ENCODE measurements at regions of chr10 and their contacts with region 1.

Region 1: DNA sequence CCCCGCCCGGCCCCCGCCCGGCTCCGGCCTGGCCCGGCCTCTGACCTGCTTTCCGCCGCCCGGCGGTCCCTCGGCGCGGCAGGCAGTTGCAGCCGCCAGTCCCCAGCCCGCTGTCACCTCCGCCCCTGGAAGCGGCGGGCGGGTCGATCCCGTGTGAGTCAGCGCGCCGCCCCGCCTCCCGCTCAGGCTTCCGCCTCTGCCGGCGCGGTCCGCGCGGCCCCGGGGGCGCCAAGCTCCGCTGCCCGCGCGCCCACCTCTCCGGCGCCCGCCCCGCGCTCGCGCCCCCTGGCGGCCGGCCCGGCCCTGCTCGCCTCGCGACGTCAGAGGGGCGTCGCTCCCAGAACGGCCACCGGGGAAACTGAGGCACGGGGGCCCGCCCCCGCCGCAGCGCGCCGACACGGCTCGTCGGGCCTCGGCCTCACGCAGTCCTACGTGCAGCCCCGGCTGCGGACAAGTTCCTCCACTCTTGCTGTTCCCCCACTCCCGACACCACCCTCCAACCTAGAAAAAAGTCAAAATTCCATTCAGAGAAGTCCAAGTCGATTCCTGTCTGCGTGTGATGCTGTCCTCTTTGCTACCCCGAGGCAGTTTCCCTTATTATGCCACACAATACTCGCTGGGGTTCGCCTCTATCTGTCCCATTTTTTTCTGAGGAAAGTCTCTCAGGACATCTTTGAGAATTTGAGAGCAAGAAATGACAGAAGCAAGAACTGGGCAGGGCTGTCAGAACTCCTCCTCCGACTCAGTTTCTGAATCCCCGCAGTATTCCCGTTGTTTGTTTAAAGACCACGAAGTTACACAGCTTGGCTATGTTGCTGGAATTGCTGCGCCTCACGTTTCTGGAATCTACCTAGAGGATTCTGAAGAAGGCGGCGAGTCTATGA is at the start of gene DNMBP:
- DNase-seq: peak; percentile 83 to 90 (median 87)
- H3K4me3 ChIP-seq: peak within 1 kb of the TSS; percentile 48
- H3K27ac ChIP-seq: peak within 1 kb of the TSS; percentile 62 to 88
- H3K4me1 ChIP-seq: peaks cover 8% of the 10 kb centered on the region
- H3K27me3 ChIP-seq: no peaks in the 10 kb centered on the region
- CTCF ChIP-seq: peak in 2 of 3 donors; percentile 88 to 89
- EP300 ChIP-seq: no peak
- POLR2A ChIP-seq: peak; percentile 28
- total RNA-seq, gene DNMBP: 10.8 to 25.4 (median 20.3) TPM

Region 2: GRCh38 chr10:99854860-99855259 is 155.2 kb before region 1 on chr10:
- intact Hi-C with region 1: loop called in 2 of 4 experiments (anchors 5 to 10 kb)
- DNase-seq: peak; percentile 35 to 63 (median 41)
- H3K4me3 ChIP-seq: no peak overlapping the region
- H3K27ac ChIP-seq: no peak overlapping the region
- H3K4me1 ChIP-seq: no peaks in the 10 kb centered on the region
- H3K27me3 ChIP-seq: no peaks in the 10 kb centered on the region
- CTCF ChIP-seq: peak; percentile 33 to 60 (median 54)
- EP300 ChIP-seq: no peak
- POLR2A ChIP-seq: no peak

Region 3: GRCh38 chr10:99906470-99906869 is 103.6 kb before region 1 on chr10:
- intact Hi-C with region 1: loop called in 2 of 4 experiments (anchors 5 to 10 kb)
- DNase-seq: peak in 4 of 5 donors; percentile 29 to 55 (median 38)
- H3K4me3 ChIP-seq: no peak overlapping the region
- H3K27ac ChIP-seq: no peak overlapping the region
- H3K4me1 ChIP-seq: peaks cover 2% of the 10 kb centered on the region
- H3K27me3 ChIP-seq: no peaks in the 10 kb centered on the region
- CTCF ChIP-seq: no peak
- EP300 ChIP-seq: no peak
- POLR2A ChIP-seq: no peak

Region 4: DNA sequence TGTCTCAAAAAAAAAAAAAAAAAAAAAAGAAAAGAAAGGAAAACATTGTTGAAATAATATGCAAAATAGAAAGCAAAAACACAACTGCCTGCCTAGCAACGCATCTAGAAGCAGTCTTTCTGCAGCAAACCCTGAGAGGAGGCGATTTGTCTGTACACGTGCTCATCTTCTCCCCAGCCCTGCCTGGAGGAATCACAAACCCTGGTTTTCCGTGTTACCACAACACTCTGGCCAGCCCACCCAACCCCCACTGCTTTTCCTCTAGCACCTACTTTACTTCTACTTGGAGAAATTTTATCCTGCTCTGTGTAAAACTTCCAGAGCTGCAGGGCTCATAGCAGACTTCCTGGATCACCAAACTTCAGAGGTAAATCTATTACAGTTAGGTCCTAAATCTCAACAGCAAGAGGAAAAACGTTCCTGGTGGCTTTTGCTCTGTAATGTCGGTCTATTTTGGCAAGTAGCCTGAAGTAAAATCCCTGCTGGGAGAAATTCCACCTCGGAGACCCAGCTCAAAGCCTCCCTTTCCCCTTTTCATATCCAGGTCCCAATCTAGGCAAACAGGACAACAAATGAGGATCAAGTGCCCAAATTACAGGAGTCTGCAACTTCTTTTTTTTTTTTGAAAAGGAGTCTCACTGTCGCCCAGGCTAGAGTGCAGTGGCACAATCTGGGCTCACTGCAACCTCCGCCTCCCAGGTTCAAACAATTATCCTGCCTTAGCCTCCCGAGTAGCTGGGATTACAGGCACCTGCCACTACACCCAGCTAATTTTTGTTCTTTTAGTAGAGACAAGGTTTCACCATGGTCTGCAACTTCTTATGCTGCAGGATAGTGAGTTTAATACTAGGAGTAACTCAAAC is 91.8 kb before region 1 on chr10:
- intact Hi-C with region 1: loop called in 1 of 4 experiments (anchors 10 kb)
- DNase-seq: peak; percentile 59 to 71 (median 64)
- H3K4me3 ChIP-seq: peak overlapping the region; percentile 8
- H3K27ac ChIP-seq: peak overlapping the region in 1 of 2 donors; percentile 27
- H3K4me1 ChIP-seq: peaks cover 7% of the 10 kb centered on the region
- H3K27me3 ChIP-seq: no peaks in the 10 kb centered on the region
- CTCF ChIP-seq: no peak
- EP300 ChIP-seq: no peak
- POLR2A ChIP-seq: no peak

Measured in ovary (tissue), 10 donors.